Activated T-helper 1 cell treated with anti-CD3 and anti-CD28 coated beads, Interleukin-12 subunit alpha, Interleukin-12 subunit beta, Interleukin-2, Interleukin-4 antibody, amounts not matched to agents 30 ng/mL and 10 ng/mL and 1 ng/mL, durations not matched to agents 14 hours and 24 hours and 36 hours (primary cell): ENCODE measurements at regions of chr2 and their contacts with region 1.

Region 1: GRCh38 chr2:200944467-200945394 is 18.7 kb downstream of the ORC2 start:
- DNase-seq: peak; percentile 15
- H3K4me3 Mint-ChIP-seq: no peak overlapping the region
- H3K27ac Mint-ChIP-seq: peak overlapping the region; percentile 70
- H3K4me1 Mint-ChIP-seq: peaks cover 23% of the 10 kb centered on the region
- H3K27me3 Mint-ChIP-seq: no peaks in the 10 kb centered on the region

Region 2: GRCh38 chr2:200929334-200930249 is 15.1 kb before region 1 on chr2:
- intact Hi-C with region 1: loop called (anchors 2 kb)
- DNase-seq: no peak
- H3K4me3 Mint-ChIP-seq: no peak overlapping the region
- H3K27ac Mint-ChIP-seq: peak overlapping the region; percentile 35
- H3K4me1 Mint-ChIP-seq: peaks cover 9% of the 10 kb centered on the region
- H3K27me3 Mint-ChIP-seq: no peaks in the 10 kb centered on the region

Region 3: GRCh38 chr2:200963124-200963917 is 18.6 kb after region 1 on chr2 and contains the start of gene ORC2:
- intact Hi-C with region 1: loop called (anchors 1 kb)
- DNase-seq: peak; percentile 93
- H3K4me3 Mint-ChIP-seq: peak within 1 kb of the TSS; percentile 97
- H3K27ac Mint-ChIP-seq: peak within 1 kb of the TSS; percentile 93
- H3K4me1 Mint-ChIP-seq: peaks cover 58% of the 10 kb centered on the region
- H3K27me3 Mint-ChIP-seq: no peaks in the 10 kb centered on the region
- total RNA-seq, gene ORC2: 63.1 and 63.3 TPM in 2 replicates